Activated T-helper 2 cell treated with anti-CD3 and anti-CD28 coated beads, Interferon-gamma antibody, Interleukin-2, Interleukin-4, amounts not matched to agents 10 μg/mL and 5 μg/mL and 100 μg/mL, durations not matched to agents 14 hours and 24 hours and 36 hours (primary cell): ENCODE measurements at regions of chr1 and their contacts with region 1.

Region 1: GRCh38 chr1:15847100-15847892 is at the start of gene SPEN:
- DNase-seq: peak; percentile 98
- H3K4me3 Mint-ChIP-seq: peak within 1 kb of the TSS; percentile 99
- H3K27ac Mint-ChIP-seq: peak within 1 kb of the TSS; percentile 92
- H3K4me1 Mint-ChIP-seq: peaks cover 46% of the 10 kb centered on the region
- H3K27me3 Mint-ChIP-seq: no peaks in the 10 kb centered on the region
- total RNA-seq, gene SPEN: 75.0 and 75.9 TPM in 2 replicates

Region 2: GRCh38 chr1:15918962-15919715 is 71.8 kb after region 1 on chr1:
- intact Hi-C with region 1: loop called (anchors 2 kb)
- DNase-seq: peak; percentile 56
- H3K4me3 Mint-ChIP-seq: peak overlapping the region; percentile 55
- H3K27ac Mint-ChIP-seq: peak overlapping the region; percentile 69
- H3K4me1 Mint-ChIP-seq: peaks cover 36% of the 10 kb centered on the region
- H3K27me3 Mint-ChIP-seq: no peaks in the 10 kb centered on the region

Region 3: GRCh38 chr1:15975805-15976680 is 128.7 kb after region 1 on chr1 and contains the start of gene ZBTB17:
- intact Hi-C with region 1: loop called (anchors 5 kb)
- DNase-seq: peak; percentile 92
- H3K4me3 Mint-ChIP-seq: peak within 1 kb of the TSS; percentile 84
- H3K27ac Mint-ChIP-seq: peak within 1 kb of the TSS; percentile 92
- H3K4me1 Mint-ChIP-seq: peaks cover 34% of the 10 kb centered on the region
- H3K27me3 Mint-ChIP-seq: no peaks in the 10 kb centered on the region
- total RNA-seq, gene ZBTB17: 65.7 and 67.8 TPM in 2 replicates